CD8-positive, alpha-beta T cell (primary cell): ENCODE measurements at regions of chr2 and their contacts with region 1.

Region 1: DNA sequence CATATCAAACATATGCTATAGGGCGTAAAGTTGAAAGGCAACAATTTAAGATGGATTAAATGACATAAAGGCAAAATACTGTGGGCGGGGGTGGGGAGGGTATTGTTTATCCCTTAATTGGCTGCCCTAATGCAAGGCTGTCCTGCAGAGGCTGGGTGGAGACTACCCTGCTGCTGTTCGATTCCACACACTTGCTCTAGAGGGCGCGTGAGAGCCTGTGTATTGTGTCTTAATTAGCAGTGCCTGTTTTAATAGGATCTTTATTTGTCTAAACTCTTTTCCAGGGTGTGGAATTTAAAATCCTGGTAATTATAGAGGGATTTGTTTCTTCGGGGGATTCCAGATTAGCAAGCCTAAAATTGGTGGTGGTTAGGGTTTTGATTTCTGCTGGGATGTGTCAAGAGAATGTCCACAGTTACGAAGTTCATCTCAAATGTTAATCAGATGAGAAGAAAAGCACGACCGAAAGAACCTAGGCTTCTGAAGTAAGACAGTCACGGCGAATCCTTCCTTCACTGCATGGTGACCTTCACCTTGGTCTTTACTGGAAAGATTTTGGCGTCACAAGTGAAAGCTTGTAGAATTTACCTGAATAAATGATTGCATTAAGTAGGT is 103.5 kb upstream of the MAP3K20 start:
- DNase-seq: peak in 7 of 9 experiments; percentile 15 to 54 (median 25)
- ATAC-seq: peak; percentile 32
- H3K4me3 ChIP-seq: no peak overlapping the region
- H3K4me3 Mint-ChIP-seq: no peak overlapping the region
- H3K27ac ChIP-seq: no peak overlapping the region
- H3K27ac Mint-ChIP-seq: no peak overlapping the region
- H3K4me1 ChIP-seq: no peaks in the 10 kb centered on the region
- H3K4me1 Mint-ChIP-seq: peaks cover 18% of the 10 kb centered on the region
- H3K27me3 ChIP-seq: no peaks in the 10 kb centered on the region
- H3K27me3 Mint-ChIP-seq: peaks cover 4% of the 10 kb centered on the region
- CTCF ChIP-seq: peak; percentile 81

Region 2: DNA sequence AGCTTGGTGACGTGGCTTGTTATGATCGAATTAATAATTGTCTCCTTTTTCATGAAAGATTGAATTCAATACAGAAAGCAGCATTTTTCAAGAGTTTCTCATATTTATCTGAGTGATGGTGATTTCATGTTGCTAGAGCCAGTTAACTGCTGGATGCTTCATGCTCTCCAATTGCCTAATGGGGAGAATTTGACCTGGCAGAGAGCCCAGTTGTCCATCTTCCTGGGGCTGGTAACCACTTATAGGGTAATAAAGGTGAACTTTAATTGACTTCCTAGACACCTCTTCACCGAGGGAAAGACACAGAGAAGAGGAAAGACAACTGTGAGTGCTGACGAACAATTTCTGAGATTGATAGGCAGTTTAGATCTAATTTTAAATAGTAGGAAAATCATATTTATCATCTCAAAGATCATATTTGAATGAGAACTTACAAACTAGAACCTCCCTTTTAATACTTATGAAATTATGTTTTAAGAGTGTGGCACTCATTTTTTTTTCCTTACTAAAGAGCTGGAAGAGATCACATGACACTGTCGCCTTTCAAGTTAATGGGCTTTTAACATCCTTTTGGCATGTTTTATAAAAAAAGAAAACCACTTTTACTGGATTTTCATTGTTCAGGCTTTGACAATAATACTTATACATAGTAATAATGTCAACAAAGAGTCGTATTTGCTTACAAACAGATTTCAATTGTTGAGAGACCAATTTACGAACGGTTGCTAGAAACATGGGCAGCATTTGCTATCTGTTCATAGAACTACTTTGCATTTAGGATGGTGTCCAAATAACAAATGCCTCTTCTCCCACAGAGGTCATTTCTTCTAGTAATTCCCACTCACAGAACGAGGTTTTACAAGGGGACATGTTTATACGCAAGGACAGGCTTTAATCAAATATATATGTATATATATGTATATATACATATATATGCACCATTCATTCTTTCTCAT is 83.1 kb before region 1 on chr2:
- CTCF ChIA-PET with region 1: no interaction called
- POLR2A ChIA-PET with region 1: no interaction called
- intact Hi-C with region 1: no loop called
- DNase-seq: no peak
- ATAC-seq: no peak
- H3K4me3 ChIP-seq: no peak overlapping the region
- H3K4me3 Mint-ChIP-seq: no peak overlapping the region
- H3K27ac ChIP-seq: no peak overlapping the region
- H3K27ac Mint-ChIP-seq: no peak overlapping the region
- H3K4me1 ChIP-seq: no peaks in the 10 kb centered on the region
- H3K4me1 Mint-ChIP-seq: peaks cover 3% of the 10 kb centered on the region
- H3K27me3 ChIP-seq: no peaks in the 10 kb centered on the region
- H3K27me3 Mint-ChIP-seq: peaks cover 4% of the 10 kb centered on the region
- CTCF ChIP-seq: no peak

Region 3: DNA sequence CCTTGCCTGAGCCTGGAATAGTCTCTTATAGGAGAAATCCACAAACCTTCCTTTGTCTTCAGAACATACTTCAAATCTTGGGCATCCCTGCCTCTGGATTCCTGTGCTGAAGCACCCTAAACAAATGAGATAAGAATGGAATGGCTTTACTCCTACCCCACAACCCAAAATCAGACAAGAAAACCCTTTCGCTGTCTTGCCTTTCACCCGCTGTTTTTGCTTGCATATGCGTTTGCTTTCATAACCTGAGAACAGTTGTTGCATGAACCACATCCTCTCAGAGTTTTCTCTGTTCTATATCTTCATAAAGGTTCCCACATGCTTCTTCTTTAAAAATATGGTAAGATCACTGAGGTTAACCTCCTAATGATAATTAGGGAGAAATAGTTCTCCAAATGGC is 28.6 kb before region 1 on chr2:
- CTCF ChIA-PET with region 1: interaction called, 3 read pairs
- POLR2A ChIA-PET with region 1: no interaction called
- intact Hi-C with region 1: loop called in 1 of 2 experiments (anchors 2 kb)
- DNase-seq: peak in 2 of 9 experiments; percentile 16 to 41
- ATAC-seq: peak; percentile 58
- H3K4me3 ChIP-seq: no peak overlapping the region
- H3K4me3 Mint-ChIP-seq: peak overlapping the region; percentile 6
- H3K27ac ChIP-seq: peak overlapping the region in 1 of 2 experiments; percentile 2
- H3K27ac Mint-ChIP-seq: peak overlapping the region; percentile 80
- H3K4me1 ChIP-seq: peaks cover 20% of the 10 kb centered on the region
- H3K4me1 Mint-ChIP-seq: peaks cover 26% of the 10 kb centered on the region
- H3K27me3 ChIP-seq: no peaks in the 10 kb centered on the region
- H3K27me3 Mint-ChIP-seq: no peaks in the 10 kb centered on the region
- CTCF ChIP-seq: no peak

Region 4: GRCh38 chr2:174235680-174236079 is 1263.6 kb after region 1 on chr2:
- CTCF ChIA-PET with region 1: no interaction called
- POLR2A ChIA-PET with region 1: no interaction called
- intact Hi-C with region 1: loop called in 1 of 2 experiments (anchors 5 kb)
- DNase-seq: no peak
- ATAC-seq: no peak
- H3K4me3 ChIP-seq: no peak overlapping the region
- H3K4me3 Mint-ChIP-seq: no peak overlapping the region
- H3K27ac ChIP-seq: no peak overlapping the region
- H3K27ac Mint-ChIP-seq: no peak overlapping the region
- H3K4me1 ChIP-seq: peaks cover 5% of the 10 kb centered on the region
- H3K4me1 Mint-ChIP-seq: peaks cover 60% of the 10 kb centered on the region
- H3K27me3 ChIP-seq: no peaks in the 10 kb centered on the region
- H3K27me3 Mint-ChIP-seq: no peaks in the 10 kb centered on the region
- CTCF ChIP-seq: no peak